Activated T-helper 1 cell treated with anti-CD3 and anti-CD28 coated beads, Interleukin-12 subunit alpha, Interleukin-12 subunit beta, Interleukin-2, Interleukin-4 antibody, amounts not matched to agents 30 ng/mL and 10 ng/mL and 1 ng/mL, durations not matched to agents 14 hours and 24 hours and 36 hours (primary cell): ENCODE measurements at regions of chr2 and their contacts with region 1.

Region 1: DNA sequence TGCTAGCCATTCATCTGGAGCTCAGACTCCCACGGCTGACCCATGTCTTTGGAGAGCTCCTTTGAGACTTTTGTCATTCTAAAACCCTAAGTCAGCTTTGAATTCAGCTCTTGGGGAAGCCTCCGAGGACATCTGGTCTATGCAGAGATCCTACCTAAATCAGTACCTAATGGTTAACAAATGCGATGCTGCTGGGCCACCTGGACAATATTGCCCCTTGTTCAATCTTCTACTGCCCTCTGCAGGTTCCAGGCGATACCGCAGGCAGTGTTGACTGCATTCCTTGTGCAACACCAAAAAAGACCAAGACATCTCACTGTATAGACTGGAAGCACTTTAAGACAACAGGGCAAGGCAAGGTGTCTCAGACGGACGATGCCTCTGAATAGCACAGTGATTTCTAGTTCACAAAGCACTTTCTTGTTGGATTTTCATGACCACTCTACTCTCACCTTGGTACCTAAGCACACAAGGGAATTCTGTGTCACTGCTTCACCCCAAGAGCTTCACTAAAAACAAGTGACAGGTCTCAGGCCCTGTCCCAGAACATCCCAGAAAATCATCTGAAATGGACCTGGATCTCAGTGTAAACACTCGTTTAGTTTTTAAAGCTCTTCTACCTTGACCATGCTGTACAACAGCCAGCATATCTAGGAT is 80.9 kb downstream of the XDH start:
- DNase-seq: peak; percentile 66
- H3K4me3 Mint-ChIP-seq: no peak overlapping the region
- H3K27ac Mint-ChIP-seq: no peak overlapping the region
- H3K4me1 Mint-ChIP-seq: no peaks in the 10 kb centered on the region
- H3K27me3 Mint-ChIP-seq: peaks cover 26% of the 10 kb centered on the region

Region 2: DNA sequence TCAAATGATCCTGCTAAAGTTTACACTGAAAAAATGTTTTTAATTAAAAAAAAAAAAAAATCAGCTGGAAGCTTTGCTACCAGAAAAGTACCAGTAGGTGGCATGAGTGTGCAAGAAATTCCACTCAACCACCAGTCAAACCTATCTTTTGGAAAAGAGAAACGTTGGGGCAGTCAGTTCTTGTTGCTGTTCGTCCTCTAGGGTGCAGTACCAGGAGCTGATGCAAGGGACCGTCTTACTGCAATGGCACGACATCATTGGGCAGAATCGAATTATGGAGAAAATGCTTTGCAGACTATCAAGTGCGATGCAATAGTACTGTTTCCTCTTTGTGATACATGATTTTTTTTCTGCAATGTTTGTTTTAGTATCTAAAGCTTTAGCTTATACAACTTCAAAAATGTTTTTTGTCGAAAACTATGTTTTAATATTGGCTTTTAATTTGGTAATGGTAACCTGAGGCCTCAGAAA is 1168.6 kb before region 1 on chr2:
- intact Hi-C with region 1: loop called (anchors 5 kb)
- DNase-seq: peak; percentile 62
- H3K4me3 Mint-ChIP-seq: no peak overlapping the region
- H3K27ac Mint-ChIP-seq: no peak overlapping the region
- H3K4me1 Mint-ChIP-seq: peaks cover 5% of the 10 kb centered on the region
- H3K27me3 Mint-ChIP-seq: peaks cover 3% of the 10 kb centered on the region

Region 3: DNA sequence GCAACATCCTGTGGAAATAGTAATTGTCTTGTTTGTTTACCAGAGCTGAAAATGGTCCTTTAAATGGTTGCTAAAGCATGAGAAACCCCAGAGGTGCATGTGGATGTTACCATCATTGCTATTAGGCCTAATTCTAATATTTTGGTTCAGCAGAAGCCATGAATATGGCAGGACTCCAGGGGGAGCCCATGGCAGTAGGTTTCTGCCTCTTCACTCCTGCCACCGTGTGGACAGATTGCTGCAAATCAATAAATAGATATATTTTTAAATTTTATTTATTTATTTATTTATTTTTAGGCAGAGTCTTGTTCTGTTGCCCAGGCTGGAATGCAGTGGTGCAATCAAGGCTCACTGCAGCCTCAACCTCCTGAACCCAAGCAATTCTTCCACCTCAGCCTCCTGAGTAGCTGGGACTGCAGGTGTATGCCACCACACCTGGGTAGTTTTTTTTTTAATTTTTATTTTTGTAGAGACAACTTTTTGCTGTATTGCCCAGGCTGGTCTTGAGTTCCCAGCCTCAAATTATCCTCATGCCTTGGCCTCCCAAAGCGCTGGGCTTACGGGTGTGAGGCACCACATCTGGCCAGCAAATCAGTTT is 471.5 kb before region 1 on chr2:
- intact Hi-C with region 1: loop called (anchors 2 kb)
- DNase-seq: no peak
- H3K4me3 Mint-ChIP-seq: no peak overlapping the region
- H3K27ac Mint-ChIP-seq: no peak overlapping the region
- H3K4me1 Mint-ChIP-seq: peaks cover 13% of the 10 kb centered on the region
- H3K27me3 Mint-ChIP-seq: peaks cover 8% of the 10 kb centered on the region

Region 4: DNA sequence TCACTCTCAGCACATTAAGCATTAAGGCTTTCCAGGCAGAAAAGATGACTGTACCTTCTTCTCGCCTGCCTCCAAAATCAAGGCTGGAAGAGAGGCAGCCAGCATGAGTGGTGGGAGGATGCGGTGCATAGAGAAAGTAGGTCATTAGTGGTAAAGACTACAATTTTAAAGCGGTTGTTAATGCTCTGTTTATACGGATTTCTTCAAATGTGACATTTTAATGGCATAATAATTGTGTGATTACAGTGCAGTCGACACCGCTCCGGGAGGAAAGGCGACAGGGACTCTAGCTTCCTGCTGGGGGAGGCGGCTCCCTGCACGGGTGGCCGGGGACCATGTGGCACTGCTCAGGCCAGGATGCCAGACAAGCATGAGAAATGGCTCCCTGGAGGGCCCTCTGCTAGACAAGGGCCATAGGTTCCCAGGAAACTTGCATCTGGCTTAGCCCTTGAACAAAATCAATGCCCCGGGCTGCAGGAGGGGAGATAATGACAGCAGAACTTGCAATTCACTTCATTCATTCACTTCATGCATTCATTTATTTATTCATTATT is 325.0 kb before region 1 on chr2:
- intact Hi-C with region 1: no loop called
- DNase-seq: no peak
- H3K4me3 Mint-ChIP-seq: no peak overlapping the region
- H3K27ac Mint-ChIP-seq: no peak overlapping the region
- H3K4me1 Mint-ChIP-seq: no peaks in the 10 kb centered on the region
- H3K27me3 Mint-ChIP-seq: peaks cover 11% of the 10 kb centered on the region

Region 5: GRCh38 chr2:31138037-31138962 is 195.4 kb before region 1 on chr2 and contains the start of gene GALNT14:
- intact Hi-C with region 1: loop called (anchors 1 kb)
- DNase-seq: peak; percentile 2
- H3K4me3 Mint-ChIP-seq: no peak within 1 kb of the TSS
- H3K27ac Mint-ChIP-seq: no peak within 1 kb of the TSS
- H3K4me1 Mint-ChIP-seq: peaks cover 5% of the 10 kb centered on the region
- H3K27me3 Mint-ChIP-seq: peaks cover 60% of the 10 kb centered on the region
- total RNA-seq, gene GALNT14: 0.21 and 0.27 TPM in 2 replicates

Region 6: DNA sequence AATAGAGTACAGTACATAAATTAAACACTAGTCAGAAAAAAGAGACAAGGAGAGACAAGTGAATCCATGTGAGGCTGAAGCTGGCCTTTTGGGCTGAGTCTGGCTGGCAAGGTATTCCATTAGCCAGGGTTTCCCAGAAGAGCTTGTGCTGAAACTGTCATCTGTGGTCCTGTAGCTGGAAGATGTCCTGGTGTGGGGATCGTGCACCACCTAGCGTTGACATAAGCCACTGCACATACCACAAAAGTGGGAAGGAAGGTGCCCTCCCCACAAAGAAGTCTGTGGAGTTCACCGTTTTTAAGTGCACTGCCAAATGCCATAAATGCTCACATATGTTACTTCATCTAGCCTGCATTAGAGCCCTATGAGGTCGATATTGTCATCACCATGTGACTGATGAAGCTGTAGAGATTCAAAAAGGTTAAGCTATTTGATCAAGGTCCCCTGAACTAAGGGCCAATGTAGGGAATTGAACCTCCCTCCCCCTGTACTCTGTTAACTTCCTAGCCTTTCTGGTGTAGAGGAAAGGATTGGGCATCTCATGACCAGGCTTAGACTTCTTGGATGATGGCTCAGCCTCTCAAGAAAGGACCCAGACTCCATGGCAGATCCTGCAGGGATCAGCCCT is 163.5 kb before region 1 on chr2:
- intact Hi-C with region 1: loop called (anchors 1 kb)
- DNase-seq: peak; percentile 31
- H3K4me3 Mint-ChIP-seq: no peak overlapping the region
- H3K27ac Mint-ChIP-seq: no peak overlapping the region
- H3K4me1 Mint-ChIP-seq: no peaks in the 10 kb centered on the region
- H3K27me3 Mint-ChIP-seq: peaks cover 3% of the 10 kb centered on the region

Region 7: DNA sequence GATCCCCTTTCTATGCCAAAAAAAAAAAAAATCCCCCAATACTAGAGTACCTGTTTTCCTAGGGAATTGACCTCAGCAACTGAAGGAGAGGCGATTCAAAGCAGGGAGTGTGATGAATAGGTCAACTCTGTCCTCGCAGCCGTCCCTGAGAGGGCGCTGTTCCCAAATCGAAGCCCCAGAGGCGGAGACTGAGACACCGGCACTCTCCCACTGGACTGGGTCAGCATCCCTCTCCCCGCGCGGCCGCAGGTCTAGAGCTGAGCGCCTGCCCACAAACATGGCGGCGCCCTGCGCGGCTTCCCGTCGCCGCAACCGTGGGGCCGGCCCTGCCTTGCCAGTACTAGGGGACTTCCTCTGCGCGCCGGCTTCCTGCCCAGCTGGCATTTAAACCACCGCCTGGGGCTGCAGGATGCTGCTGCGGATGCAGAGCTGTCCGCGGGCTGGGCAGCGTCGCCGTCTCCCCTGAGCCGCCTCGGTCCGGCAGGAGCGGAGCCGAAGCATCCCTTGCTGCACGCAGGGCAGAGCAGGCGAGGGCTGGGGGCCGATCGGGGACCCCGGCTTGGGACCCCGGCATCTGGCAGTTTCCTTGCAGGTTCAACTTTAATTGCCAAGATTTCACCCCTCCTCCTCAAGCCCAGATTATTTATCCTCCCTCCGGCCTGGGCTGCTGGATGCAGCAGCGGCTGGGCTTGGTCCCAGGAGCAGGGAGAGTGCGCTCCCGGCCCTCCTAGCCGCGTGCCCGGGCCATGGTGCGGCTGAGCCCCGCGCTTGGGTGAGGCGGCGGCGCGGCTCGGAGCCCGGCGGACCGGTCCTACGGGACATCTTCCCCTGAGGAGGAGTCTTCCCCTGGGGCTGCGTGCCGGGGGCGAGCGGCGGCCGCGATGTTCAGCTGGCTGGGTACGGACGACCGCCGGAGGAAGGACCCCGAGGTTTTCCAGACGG is 99.6 kb before region 1 on chr2 and contains the start of gene EHD3:
- intact Hi-C with region 1: loop called (anchors 1 kb)
- DNase-seq: peak; percentile 77
- H3K4me3 Mint-ChIP-seq: peak within 1 kb of the TSS; percentile 75
- H3K27ac Mint-ChIP-seq: no peak within 1 kb of the TSS
- H3K4me1 Mint-ChIP-seq: peaks cover 12% of the 10 kb centered on the region
- H3K27me3 Mint-ChIP-seq: peaks cover 13% of the 10 kb centered on the region
- total RNA-seq, gene EHD3: 1.9 and 2.1 TPM in 2 replicates

Region 8: GRCh38 chr2:31270136-31270535 is 63.5 kb before region 1 on chr2:
- intact Hi-C with region 1: loop called (anchors 5 kb)
- DNase-seq: no peak
- H3K4me3 Mint-ChIP-seq: no peak overlapping the region
- H3K27ac Mint-ChIP-seq: no peak overlapping the region
- H3K4me1 Mint-ChIP-seq: no peaks in the 10 kb centered on the region
- H3K27me3 Mint-ChIP-seq: peaks cover 2% of the 10 kb centered on the region

Region 9: DNA sequence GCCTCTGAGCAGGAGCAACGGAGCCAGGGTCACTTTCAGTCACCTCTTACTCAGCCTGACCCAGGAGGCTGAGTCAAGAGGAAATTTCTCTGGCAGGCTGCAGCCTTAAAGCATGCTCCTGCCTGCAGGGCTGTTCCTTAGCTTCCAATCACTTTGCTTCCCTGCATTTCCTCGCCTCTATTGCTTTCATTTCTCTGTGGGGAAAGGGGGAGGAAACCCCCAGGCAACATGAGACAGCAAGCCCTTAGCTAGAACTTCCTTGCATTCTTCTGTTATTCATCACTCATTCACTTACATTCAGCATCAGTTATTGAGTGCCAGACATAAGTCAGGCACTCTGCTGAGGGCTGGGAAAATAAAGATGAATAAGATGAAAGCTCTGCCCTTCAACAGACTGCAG is 67.9 kb after region 1 on chr2:
- intact Hi-C with region 1: no loop called
- DNase-seq: no peak
- H3K4me3 Mint-ChIP-seq: no peak overlapping the region
- H3K27ac Mint-ChIP-seq: no peak overlapping the region
- H3K4me1 Mint-ChIP-seq: no peaks in the 10 kb centered on the region
- H3K27me3 Mint-ChIP-seq: no peaks in the 10 kb centered on the region